H1 (cell line): ENCODE measurements at regions of chr20 and their contacts with region 1.

Region 1: GRCh38 chr20:62972270-62973032 is 19.9 kb downstream of the SLC17A9 start:
- DNase-seq: peak; percentile 38 to 97
- H3K4me3 ChIP-seq: peak overlapping the region; percentile 13 to 55 (median 24); a peak in 6 of 8 replicates
- H3K27ac ChIP-seq: no peak overlapping the region
- H3K4me1 ChIP-seq: peaks cover 2 to 20% (median 11%) of the 10 kb centered on the region in 4 experiments
- H3K27me3 ChIP-seq: peaks cover 8 to 37% (median 23%) of the 10 kb centered on the region in 4 experiments
- CTCF ChIP-seq: peak; percentile 93 to 98 (median 96)
- EP300 ChIP-seq: no peak
- POLR2A ChIP-seq: no peak
- RAD21 ChIP-seq: peak; percentile 98

Region 2: GRCh38 chr20:62953839-62954703 is 18.4 kb before region 1 on chr20:
- CTCF ChIA-PET with region 1: interaction called, 13 read pairs
- POLR2A ChIA-PET with region 1: interaction called, 13 read pairs
- DNase-seq: peak in 1 of 2 experiments; percentile 67
- H3K4me3 ChIP-seq: peak overlapping the region; percentile 1 to 61 (median 40); a peak in 6 of 8 replicates
- H3K27ac ChIP-seq: no peak overlapping the region
- H3K4me1 ChIP-seq: peaks cover 2 to 23% (median 17%) of the 10 kb centered on the region in 4 experiments
- H3K27me3 ChIP-seq: no peaks in the 10 kb centered on the region
- CTCF ChIP-seq: no peak
- EP300 ChIP-seq: no peak
- POLR2A ChIP-seq: no peak
- RAD21 ChIP-seq: no peak

Region 3: DNA sequence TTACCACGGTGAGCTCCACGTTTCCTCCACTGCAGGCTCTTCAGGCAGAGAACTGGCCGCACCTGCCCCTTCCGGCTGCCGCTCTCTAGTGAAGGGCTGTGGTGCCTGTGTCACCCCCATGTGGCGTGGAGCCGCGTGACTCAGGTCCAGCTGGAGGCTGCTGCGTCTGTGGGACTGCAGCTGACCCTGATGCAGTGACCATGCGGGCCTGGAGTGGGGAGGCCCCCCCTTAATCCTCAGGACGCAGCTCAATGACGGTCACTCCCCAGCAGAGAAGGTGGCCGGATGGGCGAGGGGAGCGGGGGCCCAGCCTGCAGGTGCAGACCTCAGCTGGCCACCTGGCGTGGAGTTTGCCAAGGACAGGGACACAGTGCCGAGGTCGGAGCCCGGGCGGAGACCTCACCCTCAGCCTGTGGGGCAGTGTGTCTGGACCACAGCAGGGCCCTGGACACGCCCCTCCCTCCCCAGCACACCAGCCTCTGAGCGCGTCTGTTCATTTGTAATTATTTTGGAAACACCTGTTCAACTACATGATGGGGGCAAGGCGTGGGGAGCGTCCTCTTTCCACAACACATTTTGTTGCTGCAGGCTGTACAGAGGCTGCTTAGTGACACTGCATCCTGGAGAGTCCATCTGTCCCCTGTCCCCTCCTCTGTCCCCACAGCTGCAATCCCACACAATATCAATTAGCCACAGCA is 23.6 kb after region 1 on chr20:
- CTCF ChIA-PET with region 1: interaction called, 10 read pairs
- POLR2A ChIA-PET with region 1: interaction called, 5 read pairs
- DNase-seq: no peak
- H3K4me3 ChIP-seq: no peak overlapping the region
- H3K27ac ChIP-seq: no peak overlapping the region
- H3K4me1 ChIP-seq: peaks cover 0 to 13% (median 7%) of the 10 kb centered on the region in 4 experiments; a peak in 5 of 7 replicates
- H3K27me3 ChIP-seq: peaks cover 0 to 5% (median 2%) of the 10 kb centered on the region in 4 experiments; a peak in 3 of 7 replicates
- CTCF ChIP-seq: no peak
- EP300 ChIP-seq: no peak
- POLR2A ChIP-seq: no peak
- RAD21 ChIP-seq: no peak

Region 4: GRCh38 chr20:63009045-63009961 is 36.9 kb after region 1 on chr20:
- CTCF ChIA-PET with region 1: interaction called, 53 read pairs
- POLR2A ChIA-PET with region 1: interaction called, 12 read pairs
- DNase-seq: peak in 1 of 2 experiments; percentile 96
- H3K4me3 ChIP-seq: peak overlapping the region in 1 of 4 experiments; percentile 58; a peak in 2 of 8 replicates
- H3K27ac ChIP-seq: no peak overlapping the region
- H3K4me1 ChIP-seq: peaks cover 0 to 30% (median 16%) of the 10 kb centered on the region in 4 experiments; a peak in 6 of 7 replicates
- H3K27me3 ChIP-seq: peaks cover 50 to 74% (median 60%) of the 10 kb centered on the region in 4 experiments
- CTCF ChIP-seq: peak; percentile 83 to 96 (median 87)
- EP300 ChIP-seq: 0 out of 3 replicates have a peak, but pooled peaks of 1 of the 2 experiments have one; percentile 16
- POLR2A ChIP-seq: no peak
- RAD21 ChIP-seq: peak; percentile 93 to 97